Activated CD4-positive, alpha-beta T cell treated with anti-CD3 and anti-CD28 coated beads for 36 hours (primary cell): ENCODE measurements at regions of chr3 and their contacts with region 1.

Region 1: GRCh38 chr3:16385151-16385550 is 120.1 kb downstream of the OXNAD1 start:
- DNase-seq: no peak
- ATAC-seq: no peak
- H3K4me3 Mint-ChIP-seq: no peak overlapping the region
- H3K27ac Mint-ChIP-seq: no peak overlapping the region
- H3K4me1 Mint-ChIP-seq: peaks cover 71% of the 10 kb centered on the region
- H3K27me3 Mint-ChIP-seq: no peaks in the 10 kb centered on the region

Region 2: DNA sequence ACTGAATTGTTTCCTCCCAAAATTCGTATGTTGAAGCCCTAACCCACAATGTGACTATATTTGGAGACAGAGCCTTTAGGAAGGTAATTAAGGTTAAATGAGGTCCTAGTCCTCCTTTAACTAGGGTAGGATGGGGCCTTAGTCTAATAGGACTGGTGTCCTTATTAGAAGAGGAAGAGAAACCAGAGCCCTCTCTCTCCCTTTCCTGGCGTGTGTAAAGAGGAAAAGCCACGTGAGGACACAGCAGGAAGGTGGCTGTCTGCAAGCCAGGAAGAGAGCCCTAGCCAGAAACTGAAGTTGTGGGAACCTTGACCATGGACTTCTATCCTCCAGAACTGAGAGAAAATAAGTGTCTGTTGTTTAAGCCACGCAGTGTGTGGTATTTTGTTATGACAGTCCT is 25.8 kb before region 1 on chr3:
- CTCF ChIA-PET with region 1: no interaction called
- POLR2A ChIA-PET with region 1: interaction called, 10 read pairs
- intact Hi-C with region 1: no loop called
- DNase-seq: no peak
- ATAC-seq: no peak
- H3K4me3 Mint-ChIP-seq: no peak overlapping the region
- H3K27ac Mint-ChIP-seq: peak overlapping the region; percentile 44
- H3K4me1 Mint-ChIP-seq: peaks cover 25% of the 10 kb centered on the region
- H3K27me3 Mint-ChIP-seq: no peaks in the 10 kb centered on the region